MCF 10A (cell line): ENCODE measurements at regions of chr9 and their contacts with region 1.

Region 1: DNA sequence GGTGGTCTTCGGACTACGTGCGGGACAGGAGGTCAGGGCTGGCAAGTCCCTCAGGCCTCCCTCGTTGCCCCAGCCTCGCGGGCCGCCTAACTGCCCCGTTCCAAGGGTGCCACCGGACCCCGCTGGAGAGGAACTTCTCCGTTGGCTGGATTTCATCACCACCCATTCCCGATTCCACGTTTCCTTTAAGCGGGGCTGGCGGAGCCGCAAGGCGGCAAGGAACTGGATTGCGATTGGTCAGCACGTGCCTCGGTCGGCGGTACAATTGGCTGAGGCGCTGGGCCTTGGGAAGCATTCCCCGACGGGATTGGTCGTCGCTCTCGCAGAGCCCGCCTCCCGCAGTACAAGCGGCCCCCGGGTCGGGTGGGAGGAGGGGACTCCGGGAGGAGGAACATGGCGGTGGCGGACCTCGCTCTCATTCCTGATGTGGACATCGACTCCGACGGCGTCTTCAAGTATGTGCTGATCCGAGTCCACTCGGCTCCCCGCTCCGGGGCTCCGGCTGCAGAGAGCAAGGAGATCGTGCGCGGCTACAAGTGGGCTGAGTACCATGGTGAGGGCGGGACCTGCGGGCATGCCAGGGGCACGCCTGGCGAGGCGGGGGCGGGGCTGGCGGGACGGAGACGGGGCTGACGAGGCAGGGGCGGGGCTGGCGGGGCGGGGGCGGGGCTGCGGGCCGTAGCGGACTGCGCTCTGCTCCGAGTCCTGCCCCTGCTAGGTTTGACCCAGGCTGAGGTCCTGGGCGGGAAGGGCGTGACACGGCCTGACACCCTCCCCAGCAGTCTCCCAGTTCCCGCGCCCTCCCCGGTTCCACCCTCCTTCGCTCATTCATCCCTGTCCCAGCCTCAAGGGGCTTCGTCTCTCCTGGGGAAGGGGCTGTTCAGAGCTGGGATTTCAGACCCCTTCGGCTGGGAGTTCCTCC is at the start of gene PHPT1:
- DNase-seq: peak; percentile 98
- H3K4me3 Mint-ChIP-seq: peak within 1 kb of the TSS; percentile 96
- H3K27ac Mint-ChIP-seq: peak within 1 kb of the TSS; percentile 89
- H3K4me1 Mint-ChIP-seq: no peaks in the 10 kb centered on the region
- H3K27me3 Mint-ChIP-seq: no peaks in the 10 kb centered on the region
- CTCF ChIP-seq: no peak
- total RNA-seq, gene PHPT1: 173 and 193 TPM in 2 replicates

Region 2: GRCh38 chr9:136429683-136430590 is 419.4 kb before region 1 on chr9:
- CTCF ChIA-PET with region 1: no interaction called
- POLR2A ChIA-PET with region 1: no interaction called
- intact Hi-C with region 1: no loop called
- DNase-seq: no peak
- H3K4me3 Mint-ChIP-seq: no peak overlapping the region
- H3K27ac Mint-ChIP-seq: no peak overlapping the region
- H3K4me1 Mint-ChIP-seq: no peaks in the 10 kb centered on the region
- H3K27me3 Mint-ChIP-seq: no peaks in the 10 kb centered on the region
- CTCF ChIP-seq: no peak

Region 3: DNA sequence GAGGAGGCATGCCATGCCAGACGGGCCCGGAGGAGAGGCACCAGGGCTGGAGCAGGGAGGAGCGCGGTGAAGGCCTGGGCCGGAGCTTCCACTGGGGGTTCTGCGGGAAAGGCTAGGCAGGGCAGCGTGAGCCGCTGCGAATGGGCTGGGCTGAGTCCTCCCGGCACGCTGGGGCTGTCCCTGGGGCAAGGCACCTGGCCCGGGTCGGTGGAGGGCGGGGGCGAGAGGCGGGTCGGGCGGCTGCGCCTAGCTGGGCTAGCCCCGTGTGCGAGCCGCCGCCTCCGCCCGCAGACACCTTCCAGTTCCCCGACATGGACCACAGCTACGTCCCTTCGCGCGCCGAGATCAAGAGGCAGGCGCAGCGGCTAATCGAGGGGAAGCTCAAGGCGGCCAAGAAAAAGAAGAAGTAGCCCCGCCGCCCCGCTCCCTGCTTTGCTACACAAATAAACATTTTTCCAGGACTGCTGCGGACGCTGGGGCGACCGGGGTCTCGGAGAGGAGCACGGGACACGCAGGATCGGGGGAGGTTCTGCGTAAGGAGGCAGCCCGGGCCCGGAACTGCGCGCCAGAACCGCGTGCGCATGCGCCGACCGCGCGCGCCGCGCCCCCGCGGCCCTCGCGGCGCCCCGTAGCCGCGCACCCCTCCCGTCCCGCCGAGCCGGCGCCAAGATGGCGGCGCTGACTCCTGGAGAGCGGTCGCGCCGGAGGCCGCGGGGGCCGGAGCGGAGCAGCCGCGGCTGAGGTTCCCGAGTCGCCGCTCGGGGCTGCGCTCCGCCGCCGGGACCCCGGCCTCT is 41.8 kb before region 1 on chr9 and contains the start of gene RABL6:
- CTCF ChIA-PET with region 1: interaction called, 4 read pairs
- POLR2A ChIA-PET with region 1: interaction called, 25 read pairs
- intact Hi-C with region 1: no loop called
- DNase-seq: peak; percentile 64
- H3K4me3 Mint-ChIP-seq: peak within 1 kb of the TSS; percentile 76
- H3K27ac Mint-ChIP-seq: no peak within 1 kb of the TSS
- H3K4me1 Mint-ChIP-seq: no peaks in the 10 kb centered on the region
- H3K27me3 Mint-ChIP-seq: no peaks in the 10 kb centered on the region
- CTCF ChIP-seq: no peak
- total RNA-seq, gene RABL6: 77.8 and 84.2 TPM in 2 replicates

Region 4: GRCh38 chr9:136885950-136886578 is 36.8 kb after region 1 on chr9 and contains the start of gene TRAF2:
- CTCF ChIA-PET with region 1: interaction called, 4 read pairs
- POLR2A ChIA-PET with region 1: interaction called, 19 read pairs
- intact Hi-C with region 1: no loop called
- DNase-seq: peak; percentile 97
- H3K4me3 Mint-ChIP-seq: peak within 1 kb of the TSS; percentile 84
- H3K27ac Mint-ChIP-seq: peak within 1 kb of the TSS; percentile 71
- H3K4me1 Mint-ChIP-seq: peaks cover 6% of the 10 kb centered on the region
- H3K27me3 Mint-ChIP-seq: no peaks in the 10 kb centered on the region
- CTCF ChIP-seq: no peak
- total RNA-seq, gene TRAF2: 10.7 and 14.1 TPM in 2 replicates

Region 5: GRCh38 chr9:136910901-136911245 is 61.6 kb after region 1 on chr9:
- CTCF ChIA-PET with region 1: no interaction called
- POLR2A ChIA-PET with region 1: no interaction called
- intact Hi-C with region 1: no loop called
- DNase-seq: no peak
- H3K4me3 Mint-ChIP-seq: no peak overlapping the region
- H3K27ac Mint-ChIP-seq: no peak overlapping the region
- H3K4me1 Mint-ChIP-seq: no peaks in the 10 kb centered on the region
- H3K27me3 Mint-ChIP-seq: no peaks in the 10 kb centered on the region
- CTCF ChIP-seq: no peak

Region 6: DNA sequence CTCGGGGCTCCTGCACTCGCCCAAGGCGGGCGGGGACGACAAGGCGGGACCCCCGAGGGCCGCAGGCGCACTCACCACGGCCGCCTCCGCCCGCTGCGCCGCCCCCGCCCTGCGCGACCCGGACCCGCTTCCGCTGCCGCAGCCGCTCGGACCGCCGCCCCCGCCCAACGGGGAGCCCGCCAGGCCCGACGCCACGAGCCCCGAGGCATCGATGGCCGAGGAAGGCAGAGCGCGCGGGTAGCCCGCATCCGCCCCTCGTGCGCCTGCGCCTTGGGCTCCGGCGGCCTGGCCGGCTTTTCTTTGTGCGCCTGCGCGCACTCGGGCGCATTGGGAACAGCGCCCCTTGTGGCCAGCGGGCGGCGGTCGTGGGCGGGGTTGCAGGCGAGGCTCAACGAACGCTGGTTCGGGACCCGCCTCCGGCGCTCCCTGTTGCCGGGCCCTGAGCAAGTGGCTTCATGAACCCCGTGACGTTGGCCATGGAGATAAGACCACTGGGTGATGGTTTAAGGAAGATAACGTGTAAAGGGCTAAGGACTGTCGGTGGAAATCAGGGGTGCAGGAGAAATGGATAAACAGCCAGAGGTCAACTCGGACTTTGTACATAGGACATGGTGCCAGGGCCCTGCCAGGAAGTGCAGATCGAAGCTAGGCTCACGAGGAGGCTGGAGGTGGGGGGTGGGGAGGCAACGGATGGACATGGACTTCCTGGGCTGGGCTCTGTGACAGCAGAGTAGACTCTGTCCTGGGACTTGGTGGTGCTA is 95.4 kb after region 1 on chr9 and contains the starts of genes C8G and FBXW5:
- CTCF ChIA-PET with region 1: interaction called, 8 read pairs
- POLR2A ChIA-PET with region 1: interaction called, 4 read pairs
- intact Hi-C with region 1: loop called (anchors 10 kb)
- DNase-seq: peak; percentile 93
- H3K4me3 Mint-ChIP-seq: peak within 1 kb of the TSS; percentile 70
- H3K27ac Mint-ChIP-seq: peak within 1 kb of the TSS; percentile 69
- H3K4me1 Mint-ChIP-seq: no peaks in the 10 kb centered on the region
- H3K27me3 Mint-ChIP-seq: no peaks in the 10 kb centered on the region
- CTCF ChIP-seq: peak; percentile 91
- total RNA-seq, gene C8G: 1.0 and 1.1 TPM in 2 replicates
- total RNA-seq, gene FBXW5: 88.8 and 100 TPM in 2 replicates

Region 7: GRCh38 chr9:136961279-136962065 is 112.2 kb after region 1 on chr9:
- CTCF ChIA-PET with region 1: no interaction called
- POLR2A ChIA-PET with region 1: no interaction called
- intact Hi-C with region 1: no loop called
- DNase-seq: no peak
- H3K4me3 Mint-ChIP-seq: no peak overlapping the region
- H3K27ac Mint-ChIP-seq: no peak overlapping the region
- H3K4me1 Mint-ChIP-seq: peaks cover 10% of the 10 kb centered on the region
- H3K27me3 Mint-ChIP-seq: no peaks in the 10 kb centered on the region
- CTCF ChIP-seq: no peak

Region 8: GRCh38 chr9:137138722-137139467 is 289.6 kb after region 1 on chr9 and contains the start of gene GRIN1:
- CTCF ChIA-PET with region 1: no interaction called
- POLR2A ChIA-PET with region 1: no interaction called
- intact Hi-C with region 1: no loop called
- DNase-seq: no peak
- H3K4me3 Mint-ChIP-seq: no peak within 1 kb of the TSS
- H3K27ac Mint-ChIP-seq: no peak within 1 kb of the TSS
- H3K4me1 Mint-ChIP-seq: peaks cover 6% of the 10 kb centered on the region
- H3K27me3 Mint-ChIP-seq: peaks cover 25% of the 10 kb centered on the region
- CTCF ChIP-seq: no peak
- total RNA-seq, gene GRIN1: 0.61 and 1.4 TPM in 2 replicates